CD8-positive, alpha-beta memory T cell (primary cell): ENCODE measurements at regions of chr16 and their contacts with region 1.

Region 1: GRCh38 chr16:20866145-20866772 is 33.9 kb downstream of the DCUN1D3 start:
- DNase-seq: no peak
- H3K4me3 ChIP-seq: no peak overlapping the region
- H3K4me3 Mint-ChIP-seq: no peak overlapping the region
- H3K27ac ChIP-seq: no peak overlapping the region
- H3K27ac Mint-ChIP-seq: no peak overlapping the region
- H3K4me1 ChIP-seq: no peaks in the 10 kb centered on the region
- H3K4me1 Mint-ChIP-seq: peaks cover 19 to 30% (median 27%) of the 10 kb centered on the region in 3 donors
- H3K27me3 ChIP-seq: no peaks in the 10 kb centered on the region
- H3K27me3 Mint-ChIP-seq: no peaks in the 10 kb centered on the region

Region 2: DNA sequence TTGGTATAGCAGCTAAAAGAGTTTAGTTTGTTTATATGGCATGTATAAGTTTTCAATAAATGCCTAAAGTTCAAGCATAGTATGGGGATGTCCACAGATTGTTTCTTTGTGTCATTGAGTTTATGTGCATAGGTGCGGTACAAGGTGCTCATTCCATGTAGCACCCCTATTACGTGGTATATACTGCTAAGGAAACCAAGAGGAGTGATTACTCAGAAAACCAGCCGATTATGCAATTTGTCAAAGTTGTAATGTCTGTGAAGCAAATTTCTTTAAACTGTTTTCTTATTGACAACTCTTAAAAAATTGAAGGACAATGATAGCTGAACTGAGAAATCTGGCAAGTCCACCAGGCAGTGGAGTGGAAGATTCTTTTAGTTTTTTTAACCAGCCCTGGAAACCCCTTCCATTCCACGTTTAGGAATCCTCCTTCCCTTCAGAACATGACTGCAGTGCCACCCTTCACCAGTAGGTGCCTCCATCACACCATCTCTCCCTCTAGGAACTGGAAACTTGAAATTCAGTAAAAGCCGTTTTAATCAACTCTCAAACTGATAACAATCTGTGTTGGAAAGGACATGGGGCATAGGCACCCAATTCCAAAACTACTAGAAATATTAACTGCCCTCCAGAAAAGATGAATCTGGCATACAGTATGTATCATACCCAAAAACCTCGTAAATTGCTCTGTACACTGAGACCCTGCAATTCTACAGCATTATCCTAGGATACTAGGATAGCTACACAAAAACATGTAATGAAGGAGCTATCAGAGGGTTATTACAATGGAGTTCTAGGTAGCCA is 16.5 kb before region 1 on chr16:
- CTCF ChIA-PET with region 1: interaction called, 22 read pairs
- POLR2A ChIA-PET with region 1: no interaction called
- DNase-seq: peak; percentile 34 to 74 (median 43)
- H3K4me3 ChIP-seq: no peak overlapping the region
- H3K4me3 Mint-ChIP-seq: no peak overlapping the region
- H3K27ac ChIP-seq: no peak overlapping the region
- H3K27ac Mint-ChIP-seq: no peak overlapping the region
- H3K4me1 ChIP-seq: peaks cover 8% of the 10 kb centered on the region
- H3K4me1 Mint-ChIP-seq: peaks cover 12 to 19% (median 15%) of the 10 kb centered on the region in 3 donors
- H3K27me3 ChIP-seq: no peaks in the 10 kb centered on the region
- H3K27me3 Mint-ChIP-seq: no peaks in the 10 kb centered on the region